ENCODE measurements at regions of chr12 and their contacts with region 1.

Region 1: DNA sequence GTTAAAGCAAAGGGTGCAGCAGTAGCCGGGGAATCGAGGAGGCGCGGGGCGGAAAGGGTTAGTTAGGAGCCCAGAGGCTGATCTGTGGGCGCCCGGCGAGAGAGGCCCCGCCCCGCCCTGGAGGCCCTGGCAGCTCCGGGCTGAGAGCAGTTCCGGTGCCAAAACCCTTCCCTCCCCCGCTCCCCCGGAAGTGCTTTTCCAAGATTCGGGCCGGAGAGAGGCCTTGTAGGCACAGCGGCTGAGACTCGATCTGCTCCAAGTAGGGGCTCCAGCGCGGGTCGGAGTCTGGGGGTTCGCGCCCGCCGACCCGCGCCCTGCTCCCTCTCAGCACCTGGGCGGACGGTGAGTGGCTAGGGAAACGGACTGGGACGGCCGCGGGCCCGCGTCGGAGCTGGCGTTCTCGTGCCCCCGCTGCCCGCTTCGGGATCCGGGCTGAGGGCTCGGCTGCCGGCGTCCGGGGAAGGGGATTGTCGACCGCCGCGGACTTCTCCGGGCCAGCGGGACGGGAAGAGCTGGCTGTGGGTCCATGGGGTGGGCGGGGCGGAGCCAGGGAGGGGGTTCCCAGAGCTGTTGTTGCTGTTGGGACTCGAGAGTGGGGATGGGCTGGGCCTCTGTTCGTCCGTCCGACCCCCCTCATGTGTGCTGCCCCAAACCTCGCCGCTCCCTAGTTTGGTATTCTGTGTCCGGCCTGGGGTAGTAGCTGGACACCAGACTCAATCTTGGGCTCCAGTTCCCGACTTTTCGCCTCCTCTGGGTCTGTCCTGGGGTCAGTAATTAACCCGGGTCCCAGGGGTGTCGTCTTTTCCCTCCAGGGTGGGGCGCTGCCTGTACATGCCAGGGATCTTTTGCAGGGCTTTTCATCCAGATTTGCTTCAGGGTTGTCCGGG is at the start of gene FRS2:
- DNase-seq: peak; percentile 90
- H3K4me3 Mint-ChIP-seq: peak within 1 kb of the TSS; percentile 95
- H3K27ac Mint-ChIP-seq: peak within 1 kb of the TSS; percentile 97
- H3K4me1 Mint-ChIP-seq: peaks cover 63% of the 10 kb centered on the region
- H3K27me3 Mint-ChIP-seq: no peaks in the 10 kb centered on the region
- CTCF ChIP-seq: peak; percentile 59
- total RNA-seq, gene FRS2: 21.3 and 28.1 TPM in 2 replicates

Region 2: GRCh38 chr12:69481133-69481532 is 10.7 kb after region 1 on chr12:
- CTCF ChIA-PET with region 1: interaction called, 4 read pairs
- POLR2A ChIA-PET with region 1: interaction called, 19 read pairs
- intact Hi-C with region 1: no loop called
- DNase-seq: no peak
- H3K4me3 Mint-ChIP-seq: no peak overlapping the region
- H3K27ac Mint-ChIP-seq: no peak overlapping the region
- H3K4me1 Mint-ChIP-seq: peaks cover 11% of the 10 kb centered on the region
- H3K27me3 Mint-ChIP-seq: no peaks in the 10 kb centered on the region
- CTCF ChIP-seq: no peak

Region 3: GRCh38 chr12:69502345-69503081 is 32.1 kb after region 1 on chr12:
- CTCF ChIA-PET with region 1: interaction called, 4 read pairs
- POLR2A ChIA-PET with region 1: interaction called, 17 read pairs
- intact Hi-C with region 1: no loop called
- DNase-seq: peak; percentile 61
- H3K4me3 Mint-ChIP-seq: peak overlapping the region; percentile 43
- H3K27ac Mint-ChIP-seq: peak overlapping the region; percentile 22
- H3K4me1 Mint-ChIP-seq: peaks cover 44% of the 10 kb centered on the region
- H3K27me3 Mint-ChIP-seq: no peaks in the 10 kb centered on the region
- CTCF ChIP-seq: no peak

Region 4: GRCh38 chr12:69534389-69534822 is 64.0 kb after region 1 on chr12:
- CTCF ChIA-PET with region 1: interaction called, 4 read pairs
- POLR2A ChIA-PET with region 1: interaction called, 11 read pairs
- intact Hi-C with region 1: no loop called
- DNase-seq: peak; percentile 75
- H3K4me3 Mint-ChIP-seq: peak overlapping the region; percentile 22
- H3K27ac Mint-ChIP-seq: peak overlapping the region; percentile 95
- H3K4me1 Mint-ChIP-seq: peaks cover 18% of the 10 kb centered on the region
- H3K27me3 Mint-ChIP-seq: no peaks in the 10 kb centered on the region
- CTCF ChIP-seq: no peak

Region 5: DNA sequence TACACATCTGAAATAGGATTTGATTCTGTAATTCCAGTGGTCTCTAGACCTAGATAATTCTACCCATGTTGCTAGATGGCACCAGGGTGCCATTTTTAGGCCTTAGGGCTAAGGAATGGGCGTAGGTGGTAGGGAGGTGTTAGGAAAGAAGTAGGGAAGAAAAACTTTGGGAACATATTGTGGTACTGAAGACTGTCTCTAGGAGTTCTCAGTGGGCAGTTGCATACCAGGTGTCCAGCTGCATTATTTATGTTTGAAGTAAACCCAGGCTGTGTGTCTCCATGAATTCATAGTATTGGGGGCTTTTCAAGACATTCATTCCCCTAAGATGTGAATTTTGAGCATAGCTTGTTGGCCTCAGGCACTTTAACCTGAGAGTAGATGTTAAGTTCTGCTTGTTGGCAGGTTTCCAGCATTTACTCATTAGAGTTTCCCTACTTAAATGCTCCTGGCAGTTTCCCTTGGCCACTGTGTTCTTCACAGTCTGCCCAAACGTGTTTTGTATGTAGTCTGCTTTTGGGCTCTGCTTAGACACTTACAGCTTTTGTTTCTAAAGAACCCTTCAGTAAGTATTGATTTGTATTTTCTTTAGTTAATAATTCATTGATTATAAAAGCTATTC is 83.3 kb after region 1 on chr12:
- CTCF ChIA-PET with region 1: interaction called, 8 read pairs
- POLR2A ChIA-PET with region 1: interaction called, 21 read pairs
- intact Hi-C with region 1: no loop called
- DNase-seq: peak; percentile 80
- H3K4me3 Mint-ChIP-seq: no peak overlapping the region
- H3K27ac Mint-ChIP-seq: peak overlapping the region; percentile 43
- H3K4me1 Mint-ChIP-seq: peaks cover 38% of the 10 kb centered on the region
- H3K27me3 Mint-ChIP-seq: no peaks in the 10 kb centered on the region
- CTCF ChIP-seq: no peak

Region 6: DNA sequence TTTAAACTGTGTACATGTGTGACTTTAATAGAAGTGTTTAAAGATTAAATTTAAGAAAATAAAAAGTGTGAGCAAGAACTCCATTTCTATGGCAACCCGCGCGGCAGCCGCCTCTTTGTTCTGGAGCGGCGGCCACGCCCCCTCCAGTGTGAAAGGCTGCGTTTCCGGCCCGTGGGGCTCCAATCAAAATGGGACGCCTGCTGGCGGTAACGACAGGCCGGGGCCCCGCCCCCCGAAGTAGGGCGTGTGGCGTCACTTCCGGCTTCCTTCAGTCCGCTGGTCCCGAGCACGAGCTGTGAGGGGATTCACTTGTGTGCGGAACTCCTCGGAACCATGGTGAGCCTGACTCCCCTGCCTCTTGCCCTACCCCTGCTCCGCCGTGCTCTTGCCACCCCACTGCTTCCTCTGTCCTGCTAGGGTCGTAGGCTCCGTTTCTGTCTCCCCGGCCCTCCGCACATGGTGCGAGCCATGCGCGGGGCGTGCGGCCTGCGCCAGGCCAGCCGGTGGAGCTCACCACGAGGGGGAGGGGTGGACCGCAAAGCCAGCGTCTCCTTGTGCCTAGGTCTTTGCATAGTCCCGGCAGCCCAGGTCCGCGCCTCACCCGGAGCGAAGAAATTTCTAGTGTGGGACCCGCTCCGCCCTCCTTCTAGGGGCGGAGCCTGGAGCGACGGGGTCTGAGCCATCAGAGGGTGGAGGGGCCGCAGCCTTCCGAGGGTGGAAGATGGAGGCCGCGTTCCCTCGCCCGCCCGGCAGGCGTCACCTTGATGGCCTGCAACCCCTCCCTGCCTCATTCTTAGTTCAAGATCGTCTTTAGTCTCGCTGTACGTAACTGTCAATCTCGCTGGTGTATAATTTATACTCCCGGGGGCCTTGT is 115.0 kb after region 1 on chr12 and contains the start of gene CCT2:
- CTCF ChIA-PET with region 1: interaction called, 6 read pairs
- POLR2A ChIA-PET with region 1: interaction called, 13 read pairs
- intact Hi-C with region 1: no loop called
- DNase-seq: peak; percentile 94
- H3K4me3 Mint-ChIP-seq: peak within 1 kb of the TSS; percentile 99
- H3K27ac Mint-ChIP-seq: peak within 1 kb of the TSS; percentile 95
- H3K4me1 Mint-ChIP-seq: no peaks in the 10 kb centered on the region
- H3K27me3 Mint-ChIP-seq: no peaks in the 10 kb centered on the region
- CTCF ChIP-seq: peak; percentile 14
- total RNA-seq, gene CCT2: 161 and 212 TPM in 2 replicates

Region 7: DNA sequence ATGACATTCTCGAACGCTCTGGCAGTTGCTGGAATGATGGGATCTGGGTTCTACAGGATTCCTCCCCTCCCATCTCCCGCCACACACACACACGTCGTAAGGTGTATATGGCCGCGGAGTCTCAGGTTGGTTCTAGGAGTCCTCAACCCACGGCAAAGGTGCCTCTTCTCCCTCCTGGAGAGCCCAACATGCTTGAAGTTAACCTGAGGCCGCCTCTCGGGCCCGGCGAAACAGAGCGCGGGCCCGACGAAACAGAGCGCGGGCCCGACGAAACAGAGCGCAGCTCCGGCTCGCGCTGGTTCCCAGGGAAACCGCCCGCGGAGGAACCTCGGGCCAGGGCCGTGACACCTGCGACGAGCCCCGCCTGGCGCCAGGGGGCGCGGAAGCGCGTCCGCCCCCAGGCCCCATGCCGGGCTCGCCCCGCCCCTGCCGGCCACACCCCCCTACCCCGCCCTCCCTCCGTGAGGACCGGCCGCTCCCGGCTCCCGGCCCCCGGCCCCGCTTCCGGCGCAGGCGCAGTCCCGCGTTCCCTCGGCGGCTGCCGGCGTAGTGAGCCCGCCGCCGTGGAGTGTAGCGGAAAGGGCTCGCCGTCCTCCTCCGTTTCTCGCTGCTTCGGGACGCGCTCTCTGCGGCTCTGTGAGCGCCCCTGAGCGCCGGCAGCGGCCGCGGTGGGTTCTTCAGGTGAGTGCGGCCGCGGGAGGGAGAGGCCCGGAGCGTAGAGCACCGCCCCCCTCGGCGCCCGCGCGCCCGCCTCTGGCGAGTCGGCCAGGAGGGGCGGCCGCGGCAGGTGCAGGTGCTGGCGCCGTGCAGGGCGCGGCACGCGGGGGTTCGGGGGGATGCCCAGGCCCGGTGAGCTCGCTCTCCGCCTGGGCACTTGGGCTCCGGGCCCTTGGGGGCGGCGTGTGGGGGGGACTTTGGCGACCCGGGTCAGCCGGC is 268.2 kb after region 1 on chr12 and contains the start of gene RAB3IP:
- CTCF ChIA-PET with region 1: no interaction called
- POLR2A ChIA-PET with region 1: interaction called, 3 read pairs
- intact Hi-C with region 1: loop called (anchors 2 kb)
- DNase-seq: peak; percentile 82
- H3K4me3 Mint-ChIP-seq: peak within 1 kb of the TSS; percentile 86
- H3K27ac Mint-ChIP-seq: peak within 1 kb of the TSS; percentile 86
- H3K4me1 Mint-ChIP-seq: peaks cover 19% of the 10 kb centered on the region
- H3K27me3 Mint-ChIP-seq: no peaks in the 10 kb centered on the region
- CTCF ChIP-seq: peak; percentile 65
- total RNA-seq, gene RAB3IP: 21.9 and 31.5 TPM in 2 replicates